ENCODE measurements at regions of chr10 and their contacts with region 1.

Region 1: GRCh38 chr10:49592726-49593563 is 17.2 kb upstream of the SLC18A3 start:
- DNase-seq: peak; percentile 56 to 82 (median 65)
- H3K4me3 ChIP-seq: no peak overlapping the region
- H3K27ac ChIP-seq: no peak overlapping the region
- H3K4me1 ChIP-seq: no peaks in the 10 kb centered on the region
- H3K27me3 ChIP-seq: no peaks in the 10 kb centered on the region
- CTCF ChIP-seq: peak; percentile 69 to 89 (median 80)
- POLR2A ChIP-seq: no peak

Region 2: GRCh38 chr10:49761789-49762565 is 169.0 kb after region 1 on chr10 and contains the start of gene OGDHL:
- intact Hi-C with region 1: no loop called
- DNase-seq: peak; percentile 49 to 85 (median 70)
- H3K4me3 ChIP-seq: peak within 1 kb of the TSS in 2 of 4 donors; percentile 20 to 66
- H3K27ac ChIP-seq: peak within 1 kb of the TSS in 1 of 5 donors; percentile 66
- H3K4me1 ChIP-seq: no peaks in the 10 kb centered on the region
- H3K27me3 ChIP-seq: no peaks in the 10 kb centered on the region
- CTCF ChIP-seq: peak in 1 of 6 experiments; percentile 2
- POLR2A ChIP-seq: peak in 1 of 2 donors; percentile 47
- total RNA-seq, gene OGDHL: 1.4 to 15.1 (median 2.7) TPM

Region 3: DNA sequence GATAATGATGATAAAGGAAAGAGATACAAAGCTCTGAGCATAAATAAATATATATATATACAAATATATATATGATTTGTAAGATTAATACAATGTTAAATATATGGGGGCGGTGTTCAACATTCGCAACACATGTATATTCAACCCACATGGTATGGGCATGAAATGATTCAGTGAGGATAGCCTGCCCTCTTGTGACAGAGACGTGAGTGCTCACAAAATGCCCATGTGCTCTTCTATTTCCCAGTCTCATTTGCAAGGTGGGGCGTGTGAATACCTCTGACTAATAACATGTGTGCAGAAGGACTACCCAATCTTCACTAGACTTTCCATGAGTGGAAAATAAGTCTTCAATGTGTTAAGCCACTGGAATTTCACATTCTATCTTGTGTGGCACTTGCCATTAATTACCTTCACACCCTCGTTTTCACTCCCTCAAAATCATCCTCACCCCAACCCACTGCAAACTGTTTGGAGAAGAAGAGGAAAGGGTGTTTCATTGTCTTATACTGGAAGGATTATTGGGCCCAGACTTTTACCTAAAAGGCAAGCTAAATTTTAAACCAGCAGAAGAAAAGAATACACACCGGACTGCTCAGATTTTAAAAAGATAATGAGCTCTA is 631.5 kb after region 1 on chr10:
- intact Hi-C with region 1: loop called in 1 of 2 experiments (anchors 10 kb)
- DNase-seq: peak in 6 of 7 donors; percentile 18 to 51 (median 24)
- H3K4me3 ChIP-seq: no peak overlapping the region
- H3K27ac ChIP-seq: no peak overlapping the region
- H3K4me1 ChIP-seq: no peaks in the 10 kb centered on the region
- H3K27me3 ChIP-seq: peaks cover 9% of the 10 kb centered on the region
- CTCF ChIP-seq: peak; percentile 18 to 52 (median 46)
- POLR2A ChIP-seq: no peak

Measured in adrenal gland (tissue), 19 donors.